Psoas muscle (tissue), 8 donors: ENCODE measurements at regions of chr20 and their contacts with region 1.

Region 1: GRCh38 chr20:51955756-51956155 is 153.4 kb upstream of the SALL4 start:
- DNase-seq: no peak
- ATAC-seq: no peak
- H3K4me3 ChIP-seq: no peak overlapping the region
- H3K27ac ChIP-seq: no peak overlapping the region
- H3K4me1 ChIP-seq: no peaks in the 10 kb centered on the region
- H3K27me3 ChIP-seq: peaks cover 0 to 4% (median 2%) of the 10 kb centered on the region in 3 donors
- CTCF ChIP-seq: no peak

Region 2: GRCh38 chr20:51800060-51800794 is 155.5 kb before region 1 on chr20:
- intact Hi-C with region 1: loop called in 1 of 2 experiments (anchors 10 kb)
- DNase-seq: peak; percentile 36 to 57
- ATAC-seq: peak in 1 of 4 donors; percentile 37
- H3K4me3 ChIP-seq: peak overlapping the region; percentile 53
- H3K27ac ChIP-seq: no peak overlapping the region
- H3K4me1 ChIP-seq: peaks cover 8% of the 10 kb centered on the region
- H3K27me3 ChIP-seq: peaks cover 0 to 48% (median 21%) of the 10 kb centered on the region in 3 donors
- CTCF ChIP-seq: peak; percentile 53

Region 3: DNA sequence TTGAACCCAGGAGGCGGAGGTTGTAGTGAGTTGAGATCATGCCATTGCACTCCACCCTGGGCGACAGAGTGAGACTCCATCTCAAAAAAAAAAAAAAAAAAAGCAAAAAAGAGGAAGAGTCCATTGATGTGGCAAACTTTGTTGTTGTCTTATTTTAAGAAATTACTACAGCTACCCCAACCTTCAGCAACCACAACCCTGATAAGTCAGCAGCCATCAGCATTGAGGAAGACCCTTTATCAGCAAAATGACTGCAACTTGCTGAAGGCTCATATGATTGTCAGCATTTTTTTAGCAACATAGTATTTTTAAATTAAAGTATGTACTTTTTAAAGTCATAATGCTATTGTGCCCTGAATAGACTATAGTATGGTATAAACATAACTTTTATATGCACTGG is 187.0 kb after region 1 on chr20:
- intact Hi-C with region 1: no loop called
- DNase-seq: no peak
- ATAC-seq: no peak
- H3K4me3 ChIP-seq: no peak overlapping the region
- H3K27ac ChIP-seq: no peak overlapping the region
- H3K4me1 ChIP-seq: no peaks in the 10 kb centered on the region
- H3K27me3 ChIP-seq: no peaks in the 10 kb centered on the region
- CTCF ChIP-seq: no peak